ENCODE measurements at regions of chr19 and their contacts with region 1.

Region 1: GRCh38 chr19:39878398-39878797 is 32.2 kb upstream of the FBL start:
- DNase-seq: no peak
- H3K4me3 Mint-ChIP-seq: no peak overlapping the region
- H3K27ac Mint-ChIP-seq: peak overlapping the region; percentile 2
- H3K4me1 Mint-ChIP-seq: no peaks in the 10 kb centered on the region
- H3K27me3 Mint-ChIP-seq: no peaks in the 10 kb centered on the region

Region 2: GRCh38 chr19:39889872-39890545 is 11.6 kb after region 1 on chr19:
- intact Hi-C with region 1: loop called (anchors 2 kb)
- DNase-seq: no peak
- H3K4me3 Mint-ChIP-seq: no peak overlapping the region
- H3K27ac Mint-ChIP-seq: no peak overlapping the region
- H3K4me1 Mint-ChIP-seq: peaks cover 6% of the 10 kb centered on the region
- H3K27me3 Mint-ChIP-seq: no peaks in the 10 kb centered on the region